Activated naive CD4-positive, alpha-beta T cell treated with anti-CD3 and anti-CD28 coated beads for 36 hours (primary cell): ENCODE measurements at regions of chr6 and their contacts with region 1.

Region 1: GRCh38 chr6:11093589-11094410 is at the start of gene SMIM13:
- DNase-seq: peak; percentile 98
- H3K4me3 Mint-ChIP-seq: peak within 1 kb of the TSS; percentile 92
- H3K27ac Mint-ChIP-seq: peak within 1 kb of the TSS; percentile 96
- H3K4me1 Mint-ChIP-seq: peaks cover 27% of the 10 kb centered on the region
- H3K27me3 Mint-ChIP-seq: no peaks in the 10 kb centered on the region
- total RNA-seq, gene SMIM13: 5.7 to 7.1 TPM

Region 2: GRCh38 chr6:10510592-10511367 is 583.0 kb before region 1 on chr6:
- CTCF ChIA-PET with region 1: no interaction called
- intact Hi-C with region 1: no loop called
- DNase-seq: peak; percentile 70
- H3K4me3 Mint-ChIP-seq: no peak overlapping the region
- H3K27ac Mint-ChIP-seq: no peak overlapping the region
- H3K4me1 Mint-ChIP-seq: no peaks in the 10 kb centered on the region
- H3K27me3 Mint-ChIP-seq: peaks cover 5% of the 10 kb centered on the region

Region 3: GRCh38 chr6:10534419-10534762 is 559.4 kb before region 1 on chr6:
- CTCF ChIA-PET with region 1: no interaction called
- intact Hi-C with region 1: loop called (anchors 5 kb)
- DNase-seq: no peak
- H3K4me3 Mint-ChIP-seq: peak overlapping the region; percentile 36
- H3K27ac Mint-ChIP-seq: no peak overlapping the region
- H3K4me1 Mint-ChIP-seq: peaks cover 33% of the 10 kb centered on the region
- H3K27me3 Mint-ChIP-seq: no peaks in the 10 kb centered on the region

Region 4: DNA sequence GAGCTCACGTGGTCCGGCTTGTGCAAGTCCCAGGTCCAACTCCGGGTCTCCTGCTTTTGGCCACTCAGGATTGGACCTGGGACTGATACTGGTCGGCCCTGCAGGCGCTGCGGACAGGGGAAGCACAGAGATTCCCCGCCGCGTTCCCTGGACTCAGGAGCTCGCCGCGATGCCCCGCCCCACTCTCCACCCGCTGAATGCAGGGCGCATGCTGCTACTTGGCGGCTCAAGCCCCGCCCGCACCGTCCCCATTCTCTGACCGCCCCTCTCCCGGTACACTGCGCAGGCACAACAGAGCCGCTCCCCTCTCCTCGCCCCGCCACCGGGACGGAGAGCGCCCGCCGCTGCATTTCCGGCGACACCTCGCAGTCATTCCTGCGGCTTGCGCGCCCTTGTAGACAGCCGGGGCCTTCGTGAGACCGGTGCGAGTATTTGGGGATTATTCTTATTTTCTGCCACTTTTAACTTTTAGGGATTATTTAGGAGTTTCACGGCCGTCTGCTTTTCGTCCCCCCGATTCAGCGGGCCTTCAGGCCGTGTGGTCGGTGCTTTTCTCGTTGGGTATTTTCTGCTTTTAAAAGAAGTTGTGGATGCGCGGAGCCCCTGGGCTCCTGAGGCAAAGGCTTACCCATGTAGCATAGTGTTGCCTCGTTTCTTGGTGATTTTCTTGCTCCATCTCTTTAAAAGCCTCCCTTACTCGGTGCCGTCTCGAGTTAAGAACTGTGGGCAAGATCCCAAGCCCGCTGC is 370.8 kb before region 1 on chr6 and contains the start of gene TMEM14C:
- CTCF ChIA-PET with region 1: no interaction called
- intact Hi-C with region 1: loop called (anchors 2 kb)
- DNase-seq: peak; percentile 94
- H3K4me3 Mint-ChIP-seq: peak within 1 kb of the TSS; percentile 89
- H3K27ac Mint-ChIP-seq: peak within 1 kb of the TSS; percentile 91
- H3K4me1 Mint-ChIP-seq: peaks cover 44% of the 10 kb centered on the region
- H3K27me3 Mint-ChIP-seq: no peaks in the 10 kb centered on the region
- total RNA-seq, gene TMEM14C: 77.0 to 81.1 TPM

Region 5: GRCh38 chr6:10837995-10838793 is 255.6 kb before region 1 on chr6 and contains the start of gene MAK:
- CTCF ChIA-PET with region 1: no interaction called
- intact Hi-C with region 1: loop called (anchors 1 kb)
- DNase-seq: peak; percentile 86
- H3K4me3 Mint-ChIP-seq: peak within 1 kb of the TSS; percentile 74
- H3K27ac Mint-ChIP-seq: peak within 1 kb of the TSS; percentile 85
- H3K4me1 Mint-ChIP-seq: peaks cover 17% of the 10 kb centered on the region
- H3K27me3 Mint-ChIP-seq: peaks cover 50% of the 10 kb centered on the region
- total RNA-seq, gene MAK: 0.12 to 0.14 TPM

Region 6: DNA sequence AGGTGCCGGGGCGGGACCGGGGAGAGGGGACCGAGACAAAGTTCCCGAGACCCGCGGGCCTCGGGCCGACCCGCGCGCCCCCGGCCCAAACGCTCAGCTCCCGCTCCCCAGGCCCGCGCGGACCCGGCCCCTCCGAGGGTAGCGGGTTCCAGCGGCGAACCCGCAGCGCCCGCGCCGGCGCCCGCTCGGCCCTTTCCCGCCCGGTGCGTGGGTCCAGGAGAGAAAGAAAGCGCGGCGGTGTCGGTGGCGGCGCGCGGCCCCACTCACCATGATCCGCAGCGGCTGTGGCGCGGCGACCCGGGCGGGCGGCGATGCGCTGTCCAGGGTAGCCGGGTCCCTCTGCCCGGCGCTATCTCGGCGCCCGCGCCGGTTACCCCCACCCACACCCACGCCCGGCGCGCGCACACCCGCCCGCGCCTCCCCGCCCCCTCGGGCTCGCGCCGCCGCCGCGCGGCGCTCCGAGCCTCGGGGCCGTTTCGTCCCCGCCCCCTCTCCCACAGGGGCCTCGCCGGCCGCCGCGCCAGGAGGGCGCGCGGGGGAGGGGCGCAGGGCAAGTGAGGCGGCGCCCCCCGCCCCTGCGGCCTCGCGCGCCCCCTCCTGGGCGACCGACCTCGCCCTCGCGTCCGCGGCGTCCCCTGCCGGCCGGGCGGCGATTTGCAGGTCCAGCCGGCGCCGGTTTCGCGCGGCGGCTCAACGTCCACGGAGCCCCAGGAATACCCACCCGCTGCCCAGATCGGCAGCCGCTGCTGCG is 49.7 kb before region 1 on chr6 and contains the start of gene ELOVL2:
- CTCF ChIA-PET with region 1: no interaction called
- intact Hi-C with region 1: no loop called
- DNase-seq: peak; percentile 12
- H3K4me3 Mint-ChIP-seq: peak within 1 kb of the TSS; percentile 64
- H3K27ac Mint-ChIP-seq: no peak within 1 kb of the TSS
- H3K4me1 Mint-ChIP-seq: peaks cover 12% of the 10 kb centered on the region
- H3K27me3 Mint-ChIP-seq: peaks cover 52% of the 10 kb centered on the region
- total RNA-seq, gene ELOVL2: not detected

Region 7: GRCh38 chr6:11144393-11144851 is 50.6 kb after region 1 on chr6:
- CTCF ChIA-PET with region 1: no interaction called
- intact Hi-C with region 1: loop called (anchors 2 kb)
- DNase-seq: peak; percentile 89
- H3K4me3 Mint-ChIP-seq: no peak overlapping the region
- H3K27ac Mint-ChIP-seq: no peak overlapping the region
- H3K4me1 Mint-ChIP-seq: peaks cover 7% of the 10 kb centered on the region
- H3K27me3 Mint-ChIP-seq: no peaks in the 10 kb centered on the region

Region 8: GRCh38 chr6:11537229-11538051 is 443.6 kb after region 1 on chr6 and contains the start of gene TMEM170B:
- CTCF ChIA-PET with region 1: no interaction called
- intact Hi-C with region 1: loop called (anchors 1 kb)
- DNase-seq: peak; percentile 84
- H3K4me3 Mint-ChIP-seq: peak within 1 kb of the TSS; percentile 78
- H3K27ac Mint-ChIP-seq: no peak within 1 kb of the TSS
- H3K4me1 Mint-ChIP-seq: peaks cover 9% of the 10 kb centered on the region
- H3K27me3 Mint-ChIP-seq: peaks cover 6% of the 10 kb centered on the region
- total RNA-seq, gene TMEM170B: 0.40 to 0.57 TPM

Region 9: GRCh38 chr6:11744753-11745152 is 651.0 kb after region 1 on chr6:
- CTCF ChIA-PET with region 1: no interaction called
- intact Hi-C with region 1: no loop called
- DNase-seq: no peak
- H3K4me3 Mint-ChIP-seq: no peak overlapping the region
- H3K27ac Mint-ChIP-seq: no peak overlapping the region
- H3K4me1 Mint-ChIP-seq: peaks cover 8% of the 10 kb centered on the region
- H3K27me3 Mint-ChIP-seq: no peaks in the 10 kb centered on the region